Ovary (tissue), 10 donors: ENCODE measurements at regions of chr6 and their contacts with region 1.

Region 1: DNA sequence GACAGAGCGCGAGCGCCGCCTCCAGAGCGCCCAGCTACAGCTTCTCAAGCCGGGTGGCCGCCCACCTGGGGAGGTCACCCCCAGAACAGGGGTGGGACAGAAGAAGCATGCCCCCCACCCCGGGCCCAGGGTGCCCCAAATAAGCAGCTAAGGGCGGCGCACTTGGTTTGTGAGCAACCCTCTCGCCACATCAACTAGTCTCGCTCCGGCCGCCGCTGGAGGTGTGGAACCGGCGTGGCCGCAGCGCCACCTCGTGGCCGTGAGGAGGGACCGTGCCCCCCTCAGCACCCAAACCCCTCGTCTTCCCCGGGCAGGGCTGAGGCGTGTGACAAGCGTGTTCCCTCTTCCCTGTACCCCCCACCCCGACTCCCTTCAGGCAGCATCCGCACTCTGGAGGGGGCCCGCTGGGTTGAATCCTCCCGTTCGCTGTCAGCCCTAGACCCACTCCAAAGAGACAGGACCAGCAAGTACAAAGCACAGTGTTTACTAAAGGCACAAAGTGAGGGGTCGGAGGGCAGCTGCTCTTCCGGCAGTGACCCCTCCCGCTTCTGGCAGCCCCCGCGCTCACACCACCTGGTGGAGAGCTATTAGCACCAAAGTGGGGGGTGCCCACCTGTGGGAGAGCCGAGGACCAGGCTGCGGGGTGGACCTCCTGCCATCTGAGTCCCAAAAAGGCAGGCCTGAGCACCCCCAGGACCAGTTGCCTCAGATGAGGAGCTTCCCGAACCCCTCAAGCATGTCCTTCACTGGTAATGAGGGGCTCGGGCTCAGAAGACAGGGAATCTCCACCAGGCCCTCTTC is 45.4 kb downstream of the MDFI start:
- DNase-seq: peak; percentile 77 to 90 (median 84)
- H3K4me3 ChIP-seq: peak overlapping the region; percentile 38
- H3K27ac ChIP-seq: peak overlapping the region; percentile 54 to 80
- H3K4me1 ChIP-seq: no peaks in the 10 kb centered on the region
- H3K27me3 ChIP-seq: no peaks in the 10 kb centered on the region
- CTCF ChIP-seq: peak; percentile 84 to 94 (median 90)
- EP300 ChIP-seq: no peak
- POLR2A ChIP-seq: no peak

Region 2: DNA sequence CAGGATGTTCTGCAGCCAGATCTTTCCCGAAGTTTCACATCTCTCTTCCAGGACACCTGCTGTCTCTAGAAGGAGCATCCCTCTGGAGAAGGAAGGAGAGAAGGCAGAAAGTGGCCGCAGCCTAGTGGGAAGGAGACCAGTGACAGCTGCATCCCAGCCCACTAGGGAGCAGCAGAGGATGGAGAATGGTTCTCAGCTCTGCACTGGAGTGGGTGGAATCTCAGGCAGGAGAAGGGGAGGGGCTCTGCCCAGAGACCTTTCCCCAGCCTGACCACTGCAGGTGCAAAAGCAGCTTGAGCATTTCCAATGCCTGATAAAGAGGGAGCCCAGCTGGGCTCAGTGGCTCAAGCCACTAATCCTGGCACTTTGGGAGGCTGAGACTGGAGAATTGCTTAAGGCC is 316.0 kb before region 1 on chr6:
- intact Hi-C with region 1: loop called (anchors 2 to 5 kb)
- DNase-seq: peak; percentile 20 to 56 (median 37)
- H3K4me3 ChIP-seq: no peak overlapping the region
- H3K27ac ChIP-seq: no peak overlapping the region
- H3K4me1 ChIP-seq: peaks cover 2% of the 10 kb centered on the region
- H3K27me3 ChIP-seq: peaks cover 3% of the 10 kb centered on the region
- CTCF ChIP-seq: peak in 1 of 3 donors; percentile 12
- EP300 ChIP-seq: no peak
- POLR2A ChIP-seq: no peak

Region 3: DNA sequence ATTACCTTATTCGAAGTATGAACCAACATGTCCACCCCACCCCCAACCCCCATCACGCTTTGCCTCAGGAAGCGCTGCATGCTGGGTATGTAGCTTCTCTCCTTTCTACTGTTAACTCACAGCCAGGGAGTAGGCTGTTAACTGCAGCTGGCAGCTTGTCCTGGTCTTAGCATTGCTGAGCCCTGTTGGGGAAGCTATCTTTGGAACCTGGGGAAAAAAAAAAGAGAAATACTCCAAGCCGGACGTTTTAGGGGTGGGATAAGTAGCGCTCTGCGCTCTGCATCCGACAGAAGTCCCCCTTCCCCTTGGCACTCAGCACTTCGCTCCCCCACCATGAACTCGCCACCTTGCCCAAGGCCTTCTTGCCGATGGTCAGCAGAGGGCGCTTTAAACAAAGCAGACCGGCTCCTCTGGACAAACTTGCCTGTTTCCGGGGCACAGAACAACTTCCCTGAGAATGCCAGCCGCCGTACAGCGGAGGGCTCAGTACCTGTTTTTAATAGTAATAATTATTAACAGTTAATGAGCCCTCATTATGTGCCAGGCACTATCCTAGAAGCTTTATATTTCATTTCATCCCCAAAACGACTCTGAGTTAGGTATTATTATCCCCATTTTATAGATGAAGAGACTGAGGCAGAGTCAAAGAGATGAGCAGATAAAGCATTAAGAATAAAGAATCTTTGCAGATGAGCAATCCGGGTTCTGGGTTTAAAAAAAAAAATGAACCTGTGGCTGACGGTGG is 80.7 kb before region 1 on chr6:
- intact Hi-C with region 1: loop called (anchors 1 to 2 kb)
- DNase-seq: peak; percentile 75 to 83 (median 83)
- H3K4me3 ChIP-seq: no peak overlapping the region
- H3K27ac ChIP-seq: no peak overlapping the region
- H3K4me1 ChIP-seq: no peaks in the 10 kb centered on the region
- H3K27me3 ChIP-seq: no peaks in the 10 kb centered on the region
- CTCF ChIP-seq: peak; percentile 43 to 80 (median 67)
- EP300 ChIP-seq: no peak
- POLR2A ChIP-seq: no peak

Region 4: DNA sequence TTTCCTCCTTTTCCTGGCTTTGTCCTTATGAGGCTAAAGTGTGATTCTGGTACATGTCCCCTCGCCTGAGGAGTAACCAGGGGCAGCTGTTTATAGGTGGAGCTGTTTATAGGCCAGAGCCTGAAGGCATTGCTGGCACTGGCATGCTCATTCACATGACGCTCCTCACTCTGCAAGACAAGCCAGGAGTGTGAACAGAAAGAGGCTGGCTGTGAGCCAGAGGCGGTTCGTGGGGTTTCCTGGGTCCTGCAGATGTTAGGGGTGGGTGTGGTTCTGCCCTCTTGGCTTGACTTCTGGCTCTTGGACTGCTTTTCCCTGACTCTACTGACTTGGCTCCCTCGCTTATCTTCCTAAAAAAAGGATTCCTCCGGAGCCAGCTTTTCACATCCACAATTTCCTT is 58.3 kb before region 1 on chr6:
- intact Hi-C with region 1: no loop called
- DNase-seq: no peak
- H3K4me3 ChIP-seq: no peak overlapping the region
- H3K27ac ChIP-seq: no peak overlapping the region
- H3K4me1 ChIP-seq: no peaks in the 10 kb centered on the region
- H3K27me3 ChIP-seq: no peaks in the 10 kb centered on the region
- CTCF ChIP-seq: no peak
- EP300 ChIP-seq: no peak
- POLR2A ChIP-seq: no peak